Prostate gland (tissue), 2 donors: ENCODE measurements at regions of chr12 and their contacts with region 1.

Region 1: GRCh38 chr12:7018350-7019042 is at the start of gene LPCAT3:
- DNase-seq: peak; percentile 97
- H3K4me3 ChIP-seq: peak within 1 kb of the TSS; percentile 66 to 86
- H3K27ac ChIP-seq: peak within 1 kb of the TSS; percentile 86
- H3K4me1 ChIP-seq: peaks cover 9% of the 10 kb centered on the region
- H3K27me3 ChIP-seq: no peaks in the 10 kb centered on the region
- CTCF ChIP-seq: peak; percentile 76 to 97 (median 91)
- POLR2A ChIP-seq: peak; percentile 93
- total RNA-seq, gene LPCAT3: 59.9 to 86.9 TPM

Region 2: GRCh38 chr12:6965026-6965661 is 53.4 kb before region 1 on chr12:
- intact Hi-C with region 1: loop called (anchors 5 kb)
- DNase-seq: peak; percentile 94
- H3K4me3 ChIP-seq: peak overlapping the region in 1 of 2 donors; percentile 85
- H3K27ac ChIP-seq: peak overlapping the region; percentile 97 to 98
- H3K4me1 ChIP-seq: peaks cover 29% of the 10 kb centered on the region
- H3K27me3 ChIP-seq: no peaks in the 10 kb centered on the region
- CTCF ChIP-seq: peak; percentile 93 to 98 (median 96)
- POLR2A ChIP-seq: peak; percentile 38

Region 3: DNA sequence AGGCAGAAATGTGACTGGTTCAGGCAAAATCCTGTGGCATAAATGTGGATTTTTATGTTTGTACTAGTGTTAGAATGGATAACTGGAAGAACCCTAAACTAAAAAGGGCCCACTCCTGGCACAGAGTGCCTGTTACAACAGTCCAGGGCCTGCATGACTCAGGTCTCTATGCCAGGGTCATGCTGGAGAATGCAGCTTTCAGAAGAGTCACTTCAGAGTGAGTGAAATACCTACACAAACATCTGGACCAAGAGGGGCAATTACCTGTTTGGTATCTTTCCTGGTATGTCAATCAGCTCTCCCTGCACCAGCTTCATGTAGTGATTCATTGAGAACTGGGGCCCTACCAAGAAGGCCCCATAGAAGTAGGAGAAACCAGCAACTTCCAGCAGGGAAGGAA is 37.8 kb before region 1 on chr12:
- intact Hi-C with region 1: no loop called
- DNase-seq: no peak
- H3K4me3 ChIP-seq: no peak overlapping the region
- H3K27ac ChIP-seq: no peak overlapping the region
- H3K4me1 ChIP-seq: no peaks in the 10 kb centered on the region
- H3K27me3 ChIP-seq: no peaks in the 10 kb centered on the region
- CTCF ChIP-seq: no peak
- POLR2A ChIP-seq: no peak